GM12878 (cell line): ENCODE measurements at regions of chr7 and their contacts with region 1.

Region 1: DNA sequence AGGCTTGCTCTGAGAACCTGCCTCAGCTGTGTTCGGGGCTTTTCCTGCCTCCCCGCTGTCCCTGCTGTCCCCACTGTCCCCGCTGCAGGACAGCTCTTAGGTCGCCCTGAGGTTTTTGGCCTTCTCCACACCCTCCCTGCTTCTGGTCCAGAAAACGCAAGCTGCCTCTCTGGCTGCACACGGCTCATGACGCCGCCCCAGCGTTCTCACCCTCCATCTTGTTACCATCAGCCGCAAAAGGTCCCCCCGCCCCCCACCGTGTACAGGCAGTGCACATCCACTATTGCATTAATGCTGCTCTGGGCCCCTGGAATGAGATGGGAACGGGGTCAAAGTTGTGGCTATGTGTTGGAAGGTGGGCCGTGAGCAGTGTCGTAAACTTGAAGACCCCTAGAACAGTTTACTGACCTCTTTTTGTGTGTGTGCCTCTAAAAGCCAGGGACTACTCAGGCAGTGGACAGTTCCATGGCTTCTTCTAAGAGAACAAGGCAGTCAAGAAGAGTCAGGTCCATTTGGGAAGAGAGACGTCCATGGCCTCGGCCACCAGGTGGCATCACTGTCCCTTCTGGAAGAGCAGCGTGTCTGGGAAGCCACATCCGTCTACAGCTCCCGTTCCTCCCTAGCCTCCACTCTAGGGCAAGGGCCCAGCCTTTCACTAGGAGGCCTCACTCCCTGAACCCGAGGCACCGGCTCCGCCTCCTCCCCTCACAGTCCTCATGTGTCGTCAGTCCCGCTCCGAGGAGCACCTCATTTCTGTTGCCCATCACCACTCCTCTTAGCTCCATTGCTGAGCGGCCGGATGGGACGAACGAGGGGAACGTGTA is 38.5 kb upstream of the MKRN1 start:
- DNase-seq: peak; percentile 23
- ATAC-seq: peak; percentile 94
- H3K4me3 ChIP-seq: no peak overlapping the region
- H3K27ac ChIP-seq: no peak overlapping the region
- H3K4me1 ChIP-seq: no peaks in the 10 kb centered on the region
- H3K27me3 ChIP-seq: no peaks in the 10 kb centered on the region; a peak in 2 of 4 replicates
- CTCF ChIP-seq: peak; percentile 71 to 83 (median 73)
- EP300 ChIP-seq: no peak
- POLR2A ChIP-seq: no peak
- RAD21 ChIP-seq: peak; percentile 57

Region 2: GRCh38 chr7:140049339-140050024 is 468.3 kb before region 1 on chr7:
- CTCF ChIA-PET with region 1: no interaction called
- POLR2A ChIA-PET with region 1: no interaction called
- RAD21 ChIA-PET with region 1: no interaction called
- SMC1A ChIA-PET with region 1: no interaction called
- in situ Hi-C with region 1: no loop called
- intact Hi-C with region 1: no loop called
- DNase-seq: no peak
- ATAC-seq: no peak
- H3K4me3 ChIP-seq: no peak overlapping the region
- H3K27ac ChIP-seq: no peak overlapping the region
- H3K4me1 ChIP-seq: peaks cover 12% of the 10 kb centered on the region
- H3K27me3 ChIP-seq: no peaks in the 10 kb centered on the region
- CTCF ChIP-seq: no peak
- EP300 ChIP-seq: no peak
- POLR2A ChIP-seq: no peak
- RAD21 ChIP-seq: no peak

Region 3: GRCh38 chr7:140415361-140415760 is 102.4 kb before region 1 on chr7:
- CTCF ChIA-PET with region 1: no interaction called
- POLR2A ChIA-PET with region 1: no interaction called
- RAD21 ChIA-PET with region 1: no interaction called
- SMC1A ChIA-PET with region 1: no interaction called
- in situ Hi-C with region 1: no loop called
- intact Hi-C with region 1: no loop called
- DNase-seq: no peak
- ATAC-seq: no peak
- H3K4me3 ChIP-seq: no peak overlapping the region
- H3K27ac ChIP-seq: no peak overlapping the region
- H3K4me1 ChIP-seq: no peaks in the 10 kb centered on the region
- H3K27me3 ChIP-seq: no peaks in the 10 kb centered on the region; a peak in 1 of 4 replicates
- CTCF ChIP-seq: no peak
- EP300 ChIP-seq: no peak
- POLR2A ChIP-seq: no peak
- RAD21 ChIP-seq: no peak

Region 4: DNA sequence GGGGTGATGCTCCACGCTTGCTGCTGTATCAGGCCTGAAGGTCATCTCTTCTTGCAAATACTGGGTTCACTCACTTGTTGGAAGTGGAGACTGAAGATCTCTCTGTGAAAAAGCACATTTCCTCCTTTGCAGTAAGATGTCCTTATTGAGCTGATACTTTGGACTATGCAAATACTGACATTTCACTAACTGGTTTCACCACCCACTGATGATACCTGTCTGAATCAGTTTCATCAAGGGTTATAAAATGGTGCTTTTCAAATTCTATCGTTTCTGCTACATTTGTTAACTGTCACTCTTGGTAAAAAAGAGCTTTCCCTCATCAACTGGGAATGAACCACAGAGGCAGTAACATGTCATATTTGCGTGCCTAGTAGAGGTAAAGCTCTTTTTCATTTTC is 78.4 kb before region 1 on chr7:
- CTCF ChIA-PET with region 1: no interaction called
- POLR2A ChIA-PET with region 1: no interaction called
- RAD21 ChIA-PET with region 1: no interaction called
- SMC1A ChIA-PET with region 1: no interaction called
- in situ Hi-C with region 1: no loop called
- intact Hi-C with region 1: no loop called
- DNase-seq: peak; percentile 7
- ATAC-seq: peak; percentile 81
- H3K4me3 ChIP-seq: no peak overlapping the region
- H3K27ac ChIP-seq: no peak overlapping the region
- H3K4me1 ChIP-seq: no peaks in the 10 kb centered on the region
- H3K27me3 ChIP-seq: no peaks in the 10 kb centered on the region
- CTCF ChIP-seq: no peak
- EP300 ChIP-seq: no peak
- POLR2A ChIP-seq: no peak
- RAD21 ChIP-seq: no peak

Region 5: GRCh38 chr7:140653319-140654108 is 135.8 kb after region 1 on chr7:
- CTCF ChIA-PET with region 1: interaction called, 29 read pairs
- POLR2A ChIA-PET with region 1: no interaction called
- RAD21 ChIA-PET with region 1: interaction called, 8 read pairs
- SMC1A ChIA-PET with region 1: interaction called, 7 read pairs
- in situ Hi-C with region 1: loop called (anchors 5 kb)
- intact Hi-C with region 1: loop called (anchors 1 kb)
- DNase-seq: no peak
- ATAC-seq: peak; percentile 61
- H3K4me3 ChIP-seq: no peak overlapping the region
- H3K27ac ChIP-seq: no peak overlapping the region
- H3K4me1 ChIP-seq: peaks cover 12% of the 10 kb centered on the region
- H3K27me3 ChIP-seq: no peaks in the 10 kb centered on the region
- CTCF ChIP-seq: peak; percentile 79 to 88 (median 81)
- EP300 ChIP-seq: no peak
- POLR2A ChIP-seq: no peak
- RAD21 ChIP-seq: peak; percentile 90

Region 6: DNA sequence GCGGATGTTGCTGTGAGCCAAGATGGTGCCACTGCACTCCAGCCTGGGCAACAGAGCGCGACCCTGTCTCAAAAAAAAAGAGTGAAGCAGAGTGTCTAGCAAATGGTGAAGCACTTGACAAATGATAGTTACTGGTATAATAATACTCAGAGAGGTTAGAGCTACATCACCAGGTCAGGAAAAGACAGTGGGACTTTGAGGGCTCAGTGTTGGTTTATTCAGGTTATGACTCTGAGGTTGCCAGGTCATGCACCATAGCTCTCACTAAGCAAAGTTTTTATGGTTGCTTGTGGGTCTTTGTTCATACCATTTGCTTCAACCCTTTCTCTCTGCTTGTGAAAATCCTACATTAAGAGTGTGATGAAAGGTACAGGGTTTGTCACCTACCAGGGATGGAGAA is 483.4 kb after region 1 on chr7:
- CTCF ChIA-PET with region 1: no interaction called
- POLR2A ChIA-PET with region 1: no interaction called
- RAD21 ChIA-PET with region 1: no interaction called
- SMC1A ChIA-PET with region 1: no interaction called
- in situ Hi-C with region 1: loop called (anchors 10 kb)
- intact Hi-C with region 1: no loop called
- DNase-seq: no peak
- ATAC-seq: 0 out of 3 replicates have a peak, but pooled peaks have one; percentile 36
- H3K4me3 ChIP-seq: no peak overlapping the region
- H3K27ac ChIP-seq: no peak overlapping the region
- H3K4me1 ChIP-seq: no peaks in the 10 kb centered on the region
- H3K27me3 ChIP-seq: no peaks in the 10 kb centered on the region
- CTCF ChIP-seq: no peak
- EP300 ChIP-seq: no peak
- POLR2A ChIP-seq: no peak
- RAD21 ChIP-seq: no peak